Mammary epithelial cell (primary cell): ENCODE measurements at regions of chr17 and their contacts with region 1.

Region 1: DNA sequence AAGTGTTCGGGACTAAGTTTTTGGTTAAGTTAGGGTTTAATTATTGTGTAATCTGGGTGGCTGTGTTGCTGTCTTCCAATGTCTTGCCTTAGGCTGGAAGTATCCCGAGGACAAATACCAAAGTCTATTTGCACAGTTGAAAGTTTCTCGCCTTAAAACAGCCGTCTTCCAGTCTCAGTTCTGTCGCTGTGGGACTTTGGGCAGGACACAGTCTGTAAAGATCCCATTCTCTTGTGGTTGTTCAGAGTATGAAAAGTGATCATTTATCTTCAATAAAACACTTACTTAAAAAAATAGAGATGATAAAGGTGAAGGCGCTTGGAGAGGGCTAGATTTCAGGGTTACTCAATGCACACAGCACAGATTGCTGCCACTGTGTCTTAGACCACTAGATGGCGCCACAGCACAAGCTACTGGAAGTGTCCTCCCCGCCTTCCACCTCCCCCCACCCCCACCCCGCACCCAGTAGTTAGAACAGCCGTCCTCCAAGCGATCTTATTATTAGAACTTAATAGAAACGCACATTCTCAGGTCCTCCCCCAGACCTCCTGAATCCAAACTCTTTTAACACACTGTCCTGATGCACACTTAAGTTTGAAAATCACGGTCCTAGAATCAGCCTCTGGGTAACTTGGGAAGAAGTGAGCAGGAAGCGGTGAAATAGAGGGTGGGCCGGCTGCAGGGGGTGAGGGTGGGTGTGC is 45.9 kb downstream of the AKAP1 start:
- DNase-seq: peak; percentile 57
- H3K4me3 ChIP-seq: peak overlapping the region in 1 of 3 experiments; percentile 37
- H3K27ac ChIP-seq: no peak overlapping the region
- H3K4me1 ChIP-seq: peaks cover 4% of the 10 kb centered on the region
- H3K27me3 ChIP-seq: no peaks in the 10 kb centered on the region
- CTCF ChIP-seq: peak; percentile 77 to 83

Region 2: GRCh38 chr17:56902355-56903083 is 228.4 kb before region 1 on chr17:
- CTCF ChIA-PET with region 1: no interaction called
- dilution Hi-C with region 1: no loop called
- in situ Hi-C with region 1: no loop called
- intact Hi-C with region 1: no loop called
- DNase-seq: peak; percentile 72
- H3K4me3 ChIP-seq: no peak overlapping the region
- H3K27ac ChIP-seq: peak overlapping the region; percentile 71
- H3K4me1 ChIP-seq: peaks cover 15% of the 10 kb centered on the region
- H3K27me3 ChIP-seq: no peaks in the 10 kb centered on the region
- CTCF ChIP-seq: no peak

Region 3: GRCh38 chr17:57234751-57235117 is 103.8 kb after region 1 on chr17:
- CTCF ChIA-PET with region 1: no interaction called
- dilution Hi-C with region 1: no loop called
- in situ Hi-C with region 1: no loop called
- intact Hi-C with region 1: loop called (anchors 1 kb)
- DNase-seq: no peak
- H3K4me3 ChIP-seq: no peak overlapping the region
- H3K27ac ChIP-seq: no peak overlapping the region
- H3K4me1 ChIP-seq: peaks cover 14% of the 10 kb centered on the region
- H3K27me3 ChIP-seq: no peaks in the 10 kb centered on the region
- CTCF ChIP-seq: peak in 1 of 2 donors; percentile 8

Region 4: GRCh38 chr17:57408071-57408811 is 277.3 kb after region 1 on chr17:
- CTCF ChIA-PET with region 1: no interaction called
- dilution Hi-C with region 1: no loop called
- in situ Hi-C with region 1: no loop called
- intact Hi-C with region 1: loop called (anchors 10 kb)
- DNase-seq: no peak
- H3K4me3 ChIP-seq: no peak overlapping the region
- H3K27ac ChIP-seq: no peak overlapping the region
- H3K4me1 ChIP-seq: no peaks in the 10 kb centered on the region
- H3K27me3 ChIP-seq: no peaks in the 10 kb centered on the region
- CTCF ChIP-seq: no peak

Region 5: GRCh38 chr17:57671667-57672632 is 541.0 kb after region 1 on chr17:
- CTCF ChIA-PET with region 1: interaction called, 3 read pairs
- dilution Hi-C with region 1: no loop called
- in situ Hi-C with region 1: no loop called
- intact Hi-C with region 1: loop called (anchors 1 kb)
- DNase-seq: peak; percentile 93
- H3K4me3 ChIP-seq: no peak overlapping the region
- H3K27ac ChIP-seq: peak overlapping the region; percentile 71
- H3K4me1 ChIP-seq: peaks cover 25% of the 10 kb centered on the region
- H3K27me3 ChIP-seq: no peaks in the 10 kb centered on the region
- CTCF ChIP-seq: peak; percentile 95

Region 6: GRCh38 chr17:57747221-57748017 is 616.5 kb after region 1 on chr17:
- CTCF ChIA-PET with region 1: no interaction called
- dilution Hi-C with region 1: no loop called
- in situ Hi-C with region 1: loop called (anchors 5 kb)
- intact Hi-C with region 1: loop called (anchors 1 kb)
- DNase-seq: peak; percentile 40
- H3K4me3 ChIP-seq: no peak overlapping the region
- H3K27ac ChIP-seq: no peak overlapping the region
- H3K4me1 ChIP-seq: no peaks in the 10 kb centered on the region
- H3K27me3 ChIP-seq: no peaks in the 10 kb centered on the region
- CTCF ChIP-seq: peak; percentile 75 to 84

Region 7: GRCh38 chr17:57849874-57850754 is 719.2 kb after region 1 on chr17 and contains the start of gene MRPS23:
- CTCF ChIA-PET with region 1: no interaction called
- dilution Hi-C with region 1: no loop called
- in situ Hi-C with region 1: loop called in 1 of 2 experiments (anchors 25 kb)
- intact Hi-C with region 1: no loop called
- DNase-seq: peak; percentile 99
- H3K4me3 ChIP-seq: peak within 1 kb of the TSS; percentile 80 to 98 (median 86)
- H3K27ac ChIP-seq: peak within 1 kb of the TSS; percentile 73
- H3K4me1 ChIP-seq: peaks cover 15% of the 10 kb centered on the region
- H3K27me3 ChIP-seq: no peaks in the 10 kb centered on the region
- CTCF ChIP-seq: no peak
- total RNA-seq, gene MRPS23: 17.7 to 48.4 TPM

Region 8: GRCh38 chr17:58112970-58113631 is 982.2 kb after region 1 on chr17:
- CTCF ChIA-PET with region 1: no interaction called
- dilution Hi-C with region 1: no loop called
- in situ Hi-C with region 1: no loop called
- intact Hi-C with region 1: loop called (anchors 5 kb)
- DNase-seq: peak; percentile 55
- H3K4me3 ChIP-seq: no peak overlapping the region
- H3K27ac ChIP-seq: no peak overlapping the region
- H3K4me1 ChIP-seq: no peaks in the 10 kb centered on the region
- H3K27me3 ChIP-seq: no peaks in the 10 kb centered on the region
- CTCF ChIP-seq: peak; percentile 95 to 98